Esophagus muscularis mucosa (tissue), 4 donors: ENCODE measurements at regions of chr5 and their contacts with region 1.

Region 1: GRCh38 chr5:119070828-119071572 is at the start of gene DMXL1:
- DNase-seq: peak; percentile 100
- H3K4me3 ChIP-seq: peak within 1 kb of the TSS; percentile 84 to 97 (median 95)
- H3K27ac ChIP-seq: peak within 1 kb of the TSS; percentile 96 to 99 (median 98)
- H3K4me1 ChIP-seq: peaks cover 21 to 46% (median 35%) of the 10 kb centered on the region in 4 donors
- H3K27me3 ChIP-seq: no peaks in the 10 kb centered on the region
- CTCF ChIP-seq: no peak
- EP300 ChIP-seq: no peak
- POLR2A ChIP-seq: peak; percentile 78
- total RNA-seq, gene DMXL1: 36.3 to 65.6 (median 39.9) TPM

Region 2: DNA sequence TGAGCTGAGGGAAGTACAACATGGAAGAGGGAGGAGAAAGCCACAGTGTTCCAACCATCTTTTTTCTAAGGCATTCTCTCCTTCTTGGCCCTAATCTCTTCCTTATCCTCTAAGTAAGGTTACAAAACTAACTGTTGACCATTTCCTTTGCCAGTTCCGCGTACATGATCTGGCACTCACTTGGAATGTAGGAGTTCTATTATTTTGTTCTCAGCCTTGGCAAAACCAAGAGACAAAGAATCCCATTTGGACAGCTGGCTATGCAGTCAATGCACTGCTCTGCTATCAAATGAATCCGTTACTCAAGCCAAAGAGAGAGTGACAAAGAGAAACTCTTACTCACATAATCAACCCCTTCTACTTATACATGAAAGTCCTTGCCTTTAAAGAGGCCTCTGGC is 492.9 kb before region 1 on chr5:
- intact Hi-C with region 1: no loop called
- DNase-seq: peak; percentile 8
- H3K4me3 ChIP-seq: no peak overlapping the region
- H3K27ac ChIP-seq: no peak overlapping the region
- H3K4me1 ChIP-seq: peaks cover 0 to 3% (median 0%) of the 10 kb centered on the region in 4 donors
- H3K27me3 ChIP-seq: no peaks in the 10 kb centered on the region
- CTCF ChIP-seq: no peak
- EP300 ChIP-seq: no peak
- POLR2A ChIP-seq: no peak

Region 3: GRCh38 chr5:118818604-118819003 is 252.4 kb before region 1 on chr5:
- intact Hi-C with region 1: no loop called
- DNase-seq: no peak
- H3K4me3 ChIP-seq: no peak overlapping the region
- H3K27ac ChIP-seq: no peak overlapping the region
- H3K4me1 ChIP-seq: no peaks in the 10 kb centered on the region
- H3K27me3 ChIP-seq: no peaks in the 10 kb centered on the region
- CTCF ChIP-seq: no peak
- EP300 ChIP-seq: no peak
- POLR2A ChIP-seq: no peak

Region 4: DNA sequence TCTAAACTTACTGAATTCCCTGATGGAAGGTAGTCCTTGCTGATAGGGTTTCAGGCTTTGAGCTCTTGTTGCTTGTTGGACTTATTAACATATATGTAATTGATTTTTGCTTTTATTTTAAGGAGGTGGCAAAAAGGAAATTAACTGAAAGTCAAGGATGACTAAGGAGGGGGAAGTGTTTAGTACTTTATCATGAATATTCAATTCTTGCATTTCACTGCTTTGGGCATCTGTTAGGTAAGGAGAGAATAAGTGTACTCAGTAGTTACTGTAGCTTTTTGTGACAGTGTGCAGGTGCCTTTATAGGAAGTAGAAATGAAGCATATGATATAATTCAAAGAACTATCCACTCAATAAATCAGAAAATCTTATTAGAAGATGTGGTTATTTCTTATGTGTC is 47.0 kb after region 1 on chr5:
- intact Hi-C with region 1: no loop called
- DNase-seq: no peak
- H3K4me3 ChIP-seq: no peak overlapping the region
- H3K27ac ChIP-seq: no peak overlapping the region
- H3K4me1 ChIP-seq: no peaks in the 10 kb centered on the region
- H3K27me3 ChIP-seq: no peaks in the 10 kb centered on the region
- CTCF ChIP-seq: no peak
- EP300 ChIP-seq: no peak
- POLR2A ChIP-seq: no peak

Region 5: DNA sequence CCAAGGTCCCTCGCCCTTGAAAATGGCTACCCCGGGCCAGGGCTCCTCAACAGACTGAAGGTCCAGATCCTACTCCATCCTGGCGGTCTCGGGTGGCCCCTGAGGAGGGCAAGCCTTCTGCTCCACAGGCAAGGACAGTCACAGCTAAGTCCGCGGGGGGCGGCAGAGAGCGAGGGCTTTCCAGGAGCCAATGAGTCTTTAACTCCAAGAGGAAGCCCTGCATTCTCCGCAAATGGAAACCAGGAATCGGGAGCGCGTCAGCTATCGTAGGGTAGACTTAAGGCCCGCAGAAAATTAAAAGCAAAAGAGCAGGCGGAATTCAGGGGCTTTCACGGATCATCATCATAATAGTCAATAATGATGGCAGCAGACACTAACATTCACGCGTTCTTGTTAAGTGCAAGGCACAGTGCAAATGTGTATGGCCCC is 197.0 kb after region 1 on chr5:
- intact Hi-C with region 1: loop called (anchors 10 kb)
- DNase-seq: peak; percentile 99
- H3K4me3 ChIP-seq: peak overlapping the region; percentile 61 to 88 (median 79)
- H3K27ac ChIP-seq: peak overlapping the region; percentile 87 to 95 (median 90)
- H3K4me1 ChIP-seq: peaks cover 15 to 34% (median 33%) of the 10 kb centered on the region in 4 donors
- H3K27me3 ChIP-seq: no peaks in the 10 kb centered on the region
- CTCF ChIP-seq: peak in 1 of 3 experiments; percentile 44
- EP300 ChIP-seq: no peak
- POLR2A ChIP-seq: no peak